ENCODE measurements at regions of chr14 and their contacts with region 1.

Region 1: DNA sequence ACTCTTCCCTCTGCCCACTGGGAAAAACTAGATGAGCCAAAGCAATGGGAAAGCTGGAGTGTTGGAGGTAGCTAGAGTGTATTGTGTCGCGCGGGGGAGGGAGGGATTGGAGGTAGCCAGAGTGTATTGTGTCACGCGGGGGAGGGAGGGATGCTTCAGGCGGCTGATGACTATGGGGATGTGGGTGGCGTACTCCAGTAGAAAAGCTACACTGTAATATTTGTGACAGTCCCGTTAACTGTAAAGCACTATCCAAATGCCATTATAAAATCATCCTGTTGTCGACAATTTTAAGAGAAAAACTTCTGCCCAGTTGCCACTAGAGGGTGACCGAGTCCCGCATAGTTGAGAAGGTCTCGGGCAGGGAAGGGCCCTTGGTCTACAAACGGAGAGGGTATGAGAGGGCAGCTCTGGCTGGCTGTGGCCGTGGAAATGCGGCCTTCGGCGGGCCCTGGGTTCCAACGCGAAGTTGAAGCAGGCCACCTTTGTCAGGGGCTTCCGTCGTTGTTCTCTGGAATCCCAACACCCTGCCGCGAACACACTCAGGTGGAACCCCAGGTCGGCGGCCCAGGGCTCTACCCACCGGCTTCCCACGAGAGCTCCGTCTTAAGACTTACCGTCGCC is 15.1 kb upstream of the PLEK2 start:
- DNase-seq: peak; percentile 84 to 92 (median 87)
- H3K4me3 ChIP-seq: no peak overlapping the region
- H3K27ac ChIP-seq: no peak overlapping the region
- H3K4me1 ChIP-seq: peaks cover 0 to 25% (median 17%) of the 10 kb centered on the region in 4 experiments
- H3K27me3 ChIP-seq: peaks cover 0 to 15% (median 4%) of the 10 kb centered on the region in 5 experiments

Region 2: DNA sequence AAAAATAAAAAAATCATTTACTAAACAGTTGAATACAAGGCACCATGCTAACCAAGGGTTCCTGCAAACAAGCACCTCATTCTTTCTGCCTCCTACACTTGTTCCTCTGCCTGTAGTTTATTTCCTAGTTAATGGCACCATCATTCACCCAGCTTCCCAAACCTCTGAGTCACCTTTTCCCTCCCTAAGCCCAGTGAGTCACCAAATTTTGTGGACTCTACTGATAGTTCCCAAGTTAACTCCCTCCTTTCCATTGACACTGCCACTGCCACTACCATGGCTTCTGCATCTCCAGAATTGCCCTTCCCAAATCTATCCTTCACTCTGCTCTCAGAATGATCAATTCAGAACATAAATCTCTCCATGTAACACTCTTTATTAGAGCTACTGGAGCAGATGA is 239.9 kb before region 1 on chr14:
- CTCF ChIA-PET with region 1: no interaction called
- POLR2A ChIA-PET with region 1: no interaction called
- DNase-seq: no peak
- H3K4me3 ChIP-seq: no peak overlapping the region
- H3K27ac ChIP-seq: no peak overlapping the region
- H3K4me1 ChIP-seq: no peaks in the 10 kb centered on the region
- H3K27me3 ChIP-seq: no peaks in the 10 kb centered on the region

Region 3: GRCh38 chr14:67514650-67515385 is 87.7 kb after region 1 on chr14:
- CTCF ChIA-PET with region 1: interaction called, 32 read pairs
- POLR2A ChIA-PET with region 1: no interaction called
- DNase-seq: peak; percentile 57 to 81 (median 77)
- H3K4me3 ChIP-seq: peak overlapping the region; percentile 54 to 85 (median 65)
- H3K27ac ChIP-seq: no peak overlapping the region
- H3K4me1 ChIP-seq: peaks cover 0 to 30% (median 20%) of the 10 kb centered on the region in 4 experiments
- H3K27me3 ChIP-seq: peaks cover 0 to 26% (median 17%) of the 10 kb centered on the region in 5 experiments

Region 4: DNA sequence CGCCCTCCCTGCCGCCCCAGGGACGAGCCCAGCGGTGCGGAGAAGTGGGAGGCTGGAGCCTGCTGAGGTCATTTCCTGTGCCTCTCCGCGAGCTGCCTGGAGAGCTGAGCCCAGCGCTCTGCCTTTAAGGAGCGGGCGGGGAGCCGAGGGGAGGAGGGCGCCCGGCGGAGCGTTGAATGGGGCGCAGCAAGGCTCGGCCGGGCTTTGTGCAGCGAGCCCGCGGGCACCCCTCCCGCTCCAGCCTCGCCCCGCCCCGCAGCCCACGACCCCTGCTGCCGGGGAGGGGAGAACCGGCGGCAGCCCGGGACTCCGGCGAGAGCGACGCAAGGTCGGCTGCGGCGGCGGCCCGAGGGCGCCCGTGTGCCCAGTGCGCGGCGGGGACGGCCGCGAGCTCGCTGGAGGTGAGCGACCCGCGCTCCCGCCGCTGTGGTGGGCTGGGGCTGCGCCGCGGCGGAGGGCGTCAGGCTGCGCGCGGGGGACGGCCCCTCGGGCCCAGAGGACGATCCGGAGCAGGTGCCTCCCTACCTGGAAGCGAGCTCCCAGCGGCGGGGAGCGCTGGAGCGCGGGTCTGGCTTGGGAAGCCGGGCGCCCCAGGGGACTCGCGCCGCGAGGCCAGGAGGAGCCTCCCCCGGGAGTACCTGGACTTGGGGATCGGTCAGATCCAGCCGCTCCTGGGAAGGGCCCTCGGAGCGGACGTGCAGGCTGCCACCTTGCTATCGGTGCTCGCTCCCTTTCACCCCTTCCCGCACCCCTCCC is 106.1 kb after region 1 on chr14 and contains the start of gene PLEKHH1:
- CTCF ChIA-PET with region 1: interaction called, 14 read pairs
- POLR2A ChIA-PET with region 1: no interaction called
- DNase-seq: peak; percentile 34 to 66 (median 59)
- H3K4me3 ChIP-seq: peak within 1 kb of the TSS; percentile 35 to 74 (median 63)
- H3K27ac ChIP-seq: no peak within 1 kb of the TSS
- H3K4me1 ChIP-seq: peaks cover 0 to 12% (median 12%) of the 10 kb centered on the region in 4 experiments
- H3K27me3 ChIP-seq: peaks cover 10 to 73% (median 44%) of the 10 kb centered on the region in 5 experiments

Region 5: GRCh38 chr14:67583711-67584644 is 156.9 kb after region 1 on chr14:
- CTCF ChIA-PET with region 1: interaction called, 131 read pairs
- POLR2A ChIA-PET with region 1: no interaction called
- DNase-seq: peak; percentile 51 to 72 (median 63)
- H3K4me3 ChIP-seq: no peak overlapping the region
- H3K27ac ChIP-seq: no peak overlapping the region
- H3K4me1 ChIP-seq: no peaks in the 10 kb centered on the region
- H3K27me3 ChIP-seq: peaks cover 0 to 6% (median 0%) of the 10 kb centered on the region in 5 experiments

Region 6: GRCh38 chr14:67766172-67766680 is 339.1 kb after region 1 on chr14:
- CTCF ChIA-PET with region 1: no interaction called
- POLR2A ChIA-PET with region 1: interaction called, 15 read pairs
- DNase-seq: peak in 2 of 3 donors; percentile 33 to 35
- H3K4me3 ChIP-seq: no peak overlapping the region
- H3K27ac ChIP-seq: no peak overlapping the region
- H3K4me1 ChIP-seq: peaks cover 0 to 3% (median 0%) of the 10 kb centered on the region in 4 experiments
- H3K27me3 ChIP-seq: no peaks in the 10 kb centered on the region

Measured in common myeloid progenitor, CD34-positive (primary cell).